ENCODE measurements at regions of chr4 and their contacts with region 1.

Region 1: GRCh38 chr4:113708250-113708649 is 53.3 kb downstream of the CAMK2D start:
- DNase-seq: no peak
- H3K4me3 ChIP-seq: no peak overlapping the region
- H3K27ac ChIP-seq: no peak overlapping the region
- H3K4me1 ChIP-seq: no peaks in the 10 kb centered on the region
- CTCF ChIP-seq: no peak

Region 2: DNA sequence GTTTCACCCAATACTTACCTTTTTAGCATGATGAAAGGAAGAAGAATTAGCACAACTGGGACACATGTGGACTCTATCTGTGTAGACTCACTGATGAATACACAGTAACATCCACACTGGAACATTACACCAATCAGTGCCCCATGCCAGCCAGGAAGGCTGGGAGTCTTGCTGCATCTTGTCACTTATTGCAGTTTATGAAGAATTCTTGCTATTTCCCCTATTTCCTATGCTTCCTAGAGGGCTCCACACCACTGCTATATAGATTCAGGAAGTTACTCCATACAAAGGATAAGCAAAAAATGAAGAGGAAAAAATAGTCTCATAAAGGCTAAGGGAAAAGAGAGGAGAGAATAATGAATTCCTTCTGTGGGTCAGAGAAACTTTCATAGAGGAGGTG is 147.7 kb before region 1 on chr4:
- CTCF ChIA-PET with region 1: no interaction called
- POLR2A ChIA-PET with region 1: no interaction called
- intact Hi-C with region 1: no loop called
- DNase-seq: no peak
- H3K4me3 ChIP-seq: no peak overlapping the region
- H3K27ac ChIP-seq: peak overlapping the region; percentile 7
- H3K4me1 ChIP-seq: peaks cover 71% of the 10 kb centered on the region
- CTCF ChIP-seq: no peak

Region 3: DNA sequence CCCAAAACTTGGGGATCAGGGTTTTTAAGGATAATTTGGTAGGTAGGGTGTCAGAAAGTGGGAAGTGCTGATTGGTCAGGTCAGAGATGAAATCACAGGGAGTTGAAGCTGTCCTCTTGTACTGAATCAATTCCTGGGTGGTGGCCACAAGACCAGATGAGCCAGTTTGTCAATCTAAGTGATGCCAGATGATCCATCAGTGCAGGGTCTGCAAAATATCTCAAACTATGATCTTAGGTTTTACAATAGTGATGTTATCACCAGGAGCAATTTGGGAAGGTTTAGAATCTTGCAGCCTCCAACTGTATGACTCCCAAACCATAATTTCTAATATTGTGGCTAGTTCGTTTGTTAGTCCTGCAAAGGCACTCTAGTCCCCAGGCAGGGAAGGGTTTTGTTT is 10.0 kb after region 1 on chr4:
- CTCF ChIA-PET with region 1: no interaction called
- POLR2A ChIA-PET with region 1: interaction called, 21 read pairs
- intact Hi-C with region 1: no loop called
- DNase-seq: no peak
- H3K4me3 ChIP-seq: no peak overlapping the region
- H3K27ac ChIP-seq: no peak overlapping the region
- H3K4me1 ChIP-seq: no peaks in the 10 kb centered on the region
- CTCF ChIP-seq: no peak

Region 4: GRCh38 chr4:113732967-113733527 is 24.8 kb after region 1 on chr4:
- CTCF ChIA-PET with region 1: no interaction called
- POLR2A ChIA-PET with region 1: interaction called, 13 read pairs
- intact Hi-C with region 1: no loop called
- DNase-seq: no peak
- H3K4me3 ChIP-seq: no peak overlapping the region
- H3K27ac ChIP-seq: no peak overlapping the region
- H3K4me1 ChIP-seq: peaks cover 3% of the 10 kb centered on the region
- CTCF ChIP-seq: no peak

Region 5: DNA sequence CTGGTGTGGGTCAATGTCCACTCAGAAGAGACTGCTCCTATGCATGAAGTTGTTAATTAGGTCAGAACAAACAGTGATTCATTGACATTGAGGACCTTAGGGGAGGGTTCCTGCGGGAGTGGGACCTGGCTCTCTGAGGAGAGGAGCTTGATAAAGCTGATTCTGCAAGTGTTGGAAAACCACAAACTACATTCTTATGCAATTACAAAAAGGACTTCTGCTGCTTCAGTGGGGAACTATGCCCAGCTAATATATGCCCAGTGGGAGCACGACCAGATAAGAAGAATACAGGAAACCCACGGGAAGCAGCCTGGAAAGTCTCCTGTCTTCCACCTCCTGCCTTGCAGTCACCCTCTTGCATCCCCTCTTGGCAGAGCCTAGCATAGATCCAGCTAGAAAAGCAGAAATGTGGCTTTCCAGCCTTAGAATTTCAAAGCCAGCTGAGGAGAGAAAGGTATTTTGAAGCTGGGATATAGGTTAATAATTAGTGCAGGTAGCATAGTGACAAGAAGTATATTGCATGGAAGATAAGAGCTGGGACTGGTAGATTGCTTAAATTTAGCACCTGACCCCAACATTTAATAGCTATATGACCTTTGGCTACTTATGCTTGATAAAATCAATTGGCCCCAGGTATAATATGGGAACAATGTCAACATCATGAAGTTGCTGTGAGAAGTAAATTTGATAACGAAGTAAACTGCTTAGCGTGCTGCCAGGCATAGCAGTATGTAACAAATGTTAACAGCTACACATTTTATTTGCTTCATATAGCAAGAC is 855.5 kb after region 1 on chr4:
- CTCF ChIA-PET with region 1: no interaction called
- POLR2A ChIA-PET with region 1: no interaction called
- intact Hi-C with region 1: no loop called
- DNase-seq: no peak
- H3K4me3 ChIP-seq: no peak overlapping the region
- H3K27ac ChIP-seq: no peak overlapping the region
- H3K4me1 ChIP-seq: no peaks in the 10 kb centered on the region
- CTCF ChIP-seq: no peak